HCT116 (cell line): ENCODE measurements at regions of chr10 and their contacts with region 1.

Region 1: DNA sequence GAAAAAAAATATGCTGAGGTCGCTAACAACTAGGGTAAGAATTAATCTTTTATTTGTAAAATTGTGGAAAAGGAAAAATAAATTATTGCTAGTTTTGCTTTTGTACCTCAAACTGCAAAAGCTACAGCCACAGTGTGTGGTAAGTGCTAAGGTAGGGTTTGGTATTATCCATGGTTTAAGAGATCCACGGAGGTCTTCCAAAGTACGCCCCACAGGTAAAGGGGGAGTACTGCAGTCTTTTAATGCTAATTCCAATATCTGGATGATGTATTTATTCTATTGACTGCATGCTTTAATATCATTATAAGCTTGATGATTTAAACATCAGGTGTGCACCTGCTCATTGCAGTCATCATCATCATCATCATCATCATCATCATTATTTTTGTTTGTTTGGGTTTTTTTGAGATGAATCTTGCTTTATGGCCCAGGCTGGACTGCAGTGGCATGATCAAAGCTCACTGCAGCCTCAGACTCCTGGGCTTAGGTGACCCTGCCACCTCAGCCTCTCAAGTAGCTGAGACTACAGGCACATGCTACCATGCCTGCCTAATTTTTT is 38.4 kb upstream of the BMS1 start:
- DNase-seq: no peak
- ATAC-seq: peak; percentile 79
- H3K4me3 ChIP-seq: no peak overlapping the region
- H3K27ac ChIP-seq: no peak overlapping the region
- H3K4me1 ChIP-seq: no peaks in the 10 kb centered on the region
- H3K27me3 ChIP-seq: no peaks in the 10 kb centered on the region
- CTCF ChIP-seq: peak in 2 of 3 experiments; percentile 48; a peak in 4 of 6 replicates
- POLR2A ChIP-seq: no peak
- RAD21 ChIP-seq: no peak

Region 2: GRCh38 chr10:42690449-42691360 is 53.5 kb before region 1 on chr10:
- CTCF ChIA-PET with region 1: no interaction called
- POLR2A ChIA-PET with region 1: no interaction called
- RAD21 ChIA-PET with region 1: no interaction called
- intact Hi-C with region 1: loop called (anchors 10 kb)
- DNase-seq: peak; percentile 19
- ATAC-seq: peak; percentile 91
- H3K4me3 ChIP-seq: no peak overlapping the region
- H3K27ac ChIP-seq: no peak overlapping the region; the same call in 1 of the 2 replicates
- H3K4me1 ChIP-seq: no peaks in the 10 kb centered on the region
- H3K27me3 ChIP-seq: no peaks in the 10 kb centered on the region
- CTCF ChIP-seq: peak in 2 of 3 experiments; percentile 35 to 50; a peak in 3 of 6 replicates
- POLR2A ChIP-seq: no peak
- RAD21 ChIP-seq: peak; percentile 33; the same call in 1 of the 2 replicates